ENCODE measurements at regions of chr17 and their contacts with region 1.

Region 1: DNA sequence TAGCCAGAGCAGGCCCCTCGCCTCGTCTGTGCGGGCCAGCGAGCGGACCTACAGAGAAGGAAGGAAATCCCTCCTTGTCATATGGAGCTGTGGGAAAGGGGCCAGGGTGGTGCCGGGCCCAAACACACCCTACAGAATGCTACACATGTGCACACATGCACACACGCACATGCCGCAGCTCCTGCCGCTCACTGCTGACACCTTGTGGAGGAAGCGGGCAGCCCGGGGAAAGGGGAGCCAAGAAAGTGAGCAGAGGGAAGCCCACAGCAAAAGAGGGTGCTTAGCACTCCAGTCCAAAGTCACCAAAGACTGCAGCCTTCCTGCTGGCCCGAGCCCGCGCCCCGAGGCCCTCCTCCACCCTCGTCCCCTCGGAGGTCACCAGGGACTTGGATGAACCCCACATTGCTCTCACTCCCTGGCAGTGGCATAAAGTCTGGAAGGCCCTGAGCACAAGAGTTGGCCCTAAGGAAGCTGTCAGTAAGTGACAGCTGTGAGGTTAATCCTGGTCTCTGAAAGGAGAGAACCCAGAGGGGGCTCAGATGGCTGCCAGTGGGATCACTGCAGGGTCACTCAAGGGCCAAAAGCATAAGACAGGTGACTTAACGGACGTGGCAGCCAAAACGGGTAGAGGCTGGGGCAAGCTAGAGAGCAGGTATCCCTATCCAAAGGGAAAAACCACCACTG is 68.2 kb downstream of the MYO18A start:
- DNase-seq: peak in 1 of 2 experiments; percentile 95
- H3K4me3 ChIP-seq: no peak overlapping the region
- H3K27ac ChIP-seq: no peak overlapping the region
- H3K4me1 ChIP-seq: peaks cover 0 to 18% (median 12%) of the 10 kb centered on the region in 4 experiments; a peak in 6 of 7 replicates
- H3K27me3 ChIP-seq: no peaks in the 10 kb centered on the region
- CTCF ChIP-seq: peak; percentile 94 to 99 (median 96)
- EP300 ChIP-seq: no peak
- POLR2A ChIP-seq: no peak
- RAD21 ChIP-seq: peak; percentile 84 to 89

Region 2: GRCh38 chr17:28828294-28829040 is 283.5 kb before region 1 on chr17:
- CTCF ChIA-PET with region 1: no interaction called
- POLR2A ChIA-PET with region 1: no interaction called
- DNase-seq: no peak
- H3K4me3 ChIP-seq: no peak overlapping the region
- H3K27ac ChIP-seq: no peak overlapping the region
- H3K4me1 ChIP-seq: no peaks in the 10 kb centered on the region
- H3K27me3 ChIP-seq: no peaks in the 10 kb centered on the region
- CTCF ChIP-seq: no peak
- EP300 ChIP-seq: no peak
- POLR2A ChIP-seq: no peak
- RAD21 ChIP-seq: no peak

Region 3: DNA sequence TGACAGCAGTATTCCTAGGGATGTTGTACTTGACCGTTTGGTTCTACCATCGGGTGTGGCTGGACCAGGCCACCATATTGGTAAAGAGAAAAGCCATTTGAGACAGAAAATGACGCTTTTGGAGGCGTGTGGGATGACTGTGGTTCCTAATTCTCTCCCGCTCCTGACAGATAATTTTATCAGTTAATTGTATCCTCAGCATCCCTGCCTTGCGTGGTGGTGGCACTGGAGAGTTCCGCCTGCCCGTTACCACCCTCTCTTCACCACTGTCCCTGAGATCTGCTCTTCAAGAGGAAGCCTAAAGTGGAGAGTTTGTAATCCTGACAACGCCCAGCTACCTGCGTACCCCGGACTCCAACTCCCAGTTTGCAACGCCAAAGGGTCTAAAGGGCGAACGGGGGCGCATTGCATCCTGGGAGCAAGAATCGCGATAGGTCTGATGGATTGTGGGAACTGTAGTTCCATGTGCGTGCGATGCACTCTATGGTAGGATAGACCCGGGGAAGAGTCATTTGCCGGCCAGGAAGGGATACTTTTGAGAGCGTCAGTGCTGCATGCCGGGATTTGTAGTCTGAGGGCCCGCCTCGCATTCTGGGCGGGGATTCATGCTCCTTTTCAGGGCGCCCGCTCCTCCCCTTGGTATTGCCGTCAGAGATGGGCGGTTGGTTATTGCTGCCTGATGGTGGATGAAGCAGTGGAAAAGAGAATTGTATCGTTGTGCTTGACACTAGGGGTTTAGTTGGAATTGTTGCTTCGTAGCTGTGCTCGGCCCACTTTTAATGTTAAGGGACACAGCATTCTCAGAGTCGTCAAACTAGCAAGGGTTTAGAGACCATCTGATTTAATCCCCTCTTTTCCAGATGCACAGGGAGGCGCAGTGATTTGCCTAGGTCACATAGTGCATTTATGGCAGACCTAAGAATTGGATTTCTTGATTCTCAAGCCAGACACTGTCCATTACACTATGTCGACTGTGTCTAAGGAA is 159.7 kb before region 1 on chr17:
- CTCF ChIA-PET with region 1: interaction called, 548 read pairs
- POLR2A ChIA-PET with region 1: interaction called, 4 read pairs
- DNase-seq: peak; percentile 89 to 96
- H3K4me3 ChIP-seq: peak overlapping the region; percentile 68 to 97 (median 84)
- H3K27ac ChIP-seq: peak overlapping the region; percentile 92
- H3K4me1 ChIP-seq: peaks cover 9 to 28% (median 14%) of the 10 kb centered on the region in 4 experiments; a peak in 5 of 7 replicates
- H3K27me3 ChIP-seq: no peaks in the 10 kb centered on the region
- CTCF ChIP-seq: no peak
- EP300 ChIP-seq: no peak
- POLR2A ChIP-seq: peak; percentile 49 to 60; a peak in 2 of 3 replicates
- RAD21 ChIP-seq: no peak

Region 4: GRCh38 chr17:28982131-28982951 is 129.6 kb before region 1 on chr17:
- CTCF ChIA-PET with region 1: interaction called, 23 read pairs
- POLR2A ChIA-PET with region 1: no interaction called
- DNase-seq: no peak
- H3K4me3 ChIP-seq: no peak overlapping the region
- H3K27ac ChIP-seq: no peak overlapping the region
- H3K4me1 ChIP-seq: peaks cover 14 to 18% (median 16%) of the 10 kb centered on the region in 4 experiments
- H3K27me3 ChIP-seq: no peaks in the 10 kb centered on the region
- CTCF ChIP-seq: no peak
- EP300 ChIP-seq: no peak
- POLR2A ChIP-seq: no peak
- RAD21 ChIP-seq: no peak

Region 5: GRCh38 chr17:29019475-29020181 is 92.3 kb before region 1 on chr17:
- CTCF ChIA-PET with region 1: interaction called, 105 read pairs
- POLR2A ChIA-PET with region 1: no interaction called
- DNase-seq: peak in 1 of 2 experiments; percentile 72
- H3K4me3 ChIP-seq: peak overlapping the region in 2 of 4 experiments; percentile 23 to 45; a peak in 4 of 8 replicates
- H3K27ac ChIP-seq: no peak overlapping the region
- H3K4me1 ChIP-seq: peaks cover 20 to 37% (median 32%) of the 10 kb centered on the region in 4 experiments
- H3K27me3 ChIP-seq: peaks cover 0 to 3% (median 0%) of the 10 kb centered on the region in 4 experiments; a peak in 3 of 7 replicates
- CTCF ChIP-seq: no peak
- EP300 ChIP-seq: no peak
- POLR2A ChIP-seq: no peak
- RAD21 ChIP-seq: no peak

Region 6: GRCh38 chr17:29042679-29043538 is 69.0 kb before region 1 on chr17 and contains the start of gene PIPOX:
- CTCF ChIA-PET with region 1: interaction called, 23 read pairs
- POLR2A ChIA-PET with region 1: interaction called, 3 read pairs
- DNase-seq: peak; percentile 81 to 94
- H3K4me3 ChIP-seq: peak within 1 kb of the TSS in 3 of 4 experiments; percentile 0 to 25 (median 15); a peak in 3 of 8 replicates
- H3K27ac ChIP-seq: peak within 1 kb of the TSS; percentile 92
- H3K4me1 ChIP-seq: peaks cover 14 to 27% (median 20%) of the 10 kb centered on the region in 4 experiments
- H3K27me3 ChIP-seq: no peaks in the 10 kb centered on the region
- CTCF ChIP-seq: peak; percentile 26 to 54 (median 45)
- EP300 ChIP-seq: peak in 1 of 2 experiments; percentile 85; a peak in 1 of 3 replicates
- POLR2A ChIP-seq: peak; percentile 60 to 89
- RAD21 ChIP-seq: peak in 1 of 2 experiments; percentile 63; a peak in 2 of 4 replicates
- total RNA-seq, gene PIPOX: 55.5 and 57.2 TPM in 2 replicates

Region 7: DNA sequence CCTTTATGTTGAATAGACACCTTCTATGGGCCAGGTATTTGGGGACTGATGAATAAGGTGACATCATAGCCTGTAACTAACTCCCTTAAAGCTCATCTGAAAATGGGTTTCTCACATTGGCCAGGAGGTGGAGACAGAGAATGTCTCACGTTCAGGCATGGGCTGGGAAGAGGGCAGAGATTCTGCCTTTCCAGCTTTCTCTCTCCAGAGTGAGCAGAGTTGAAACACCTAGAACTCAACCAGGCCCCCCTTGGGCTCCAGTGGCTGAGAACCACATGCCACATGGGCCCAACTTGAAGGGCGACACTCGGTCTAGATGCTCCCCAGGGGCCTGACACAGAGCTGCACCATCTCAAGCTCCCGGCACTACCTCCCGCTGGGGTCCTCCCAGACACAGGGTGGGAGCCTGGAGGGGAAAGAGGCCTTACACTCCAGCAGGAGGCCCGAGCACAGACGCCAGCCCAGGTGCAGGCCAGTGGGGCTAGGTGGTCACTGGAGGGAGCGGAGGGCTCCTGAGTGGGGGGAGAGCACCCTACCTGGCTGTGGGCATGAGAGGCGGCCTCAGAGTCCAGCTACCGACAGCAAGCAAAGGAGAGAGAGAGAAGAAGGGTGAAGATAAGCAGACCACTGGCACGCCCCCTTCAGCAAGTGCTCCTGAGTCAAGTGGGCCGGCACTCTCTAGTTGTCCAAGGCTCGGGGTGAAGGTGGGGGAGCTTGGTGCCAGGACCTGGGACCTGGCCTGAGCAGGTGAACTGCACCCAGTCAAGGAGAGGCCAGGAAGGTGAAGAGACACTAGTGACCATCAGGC is 12.4 kb after region 1 on chr17:
- CTCF ChIA-PET with region 1: interaction called, 511 read pairs
- POLR2A ChIA-PET with region 1: interaction called, 7 read pairs
- DNase-seq: peak in 1 of 2 experiments; percentile 57
- H3K4me3 ChIP-seq: no peak overlapping the region
- H3K27ac ChIP-seq: no peak overlapping the region
- H3K4me1 ChIP-seq: peaks cover 0 to 7% (median 2%) of the 10 kb centered on the region in 4 experiments; a peak in 3 of 7 replicates
- H3K27me3 ChIP-seq: no peaks in the 10 kb centered on the region
- CTCF ChIP-seq: peak; percentile 48 to 92 (median 85)
- EP300 ChIP-seq: no peak
- POLR2A ChIP-seq: no peak
- RAD21 ChIP-seq: peak; percentile 92 to 93

Region 8: GRCh38 chr17:29219378-29220047 is 107.6 kb after region 1 on chr17:
- CTCF ChIA-PET with region 1: interaction called, 12 read pairs
- POLR2A ChIA-PET with region 1: no interaction called
- DNase-seq: peak; percentile 43 to 94
- H3K4me3 ChIP-seq: no peak overlapping the region
- H3K27ac ChIP-seq: no peak overlapping the region
- H3K4me1 ChIP-seq: no peaks in the 10 kb centered on the region
- H3K27me3 ChIP-seq: no peaks in the 10 kb centered on the region
- CTCF ChIP-seq: peak; percentile 79 to 97 (median 93)
- EP300 ChIP-seq: no peak
- POLR2A ChIP-seq: no peak
- RAD21 ChIP-seq: peak; percentile 75 to 83